ENCODE measurements at regions of chr15 and their contacts with region 1.

Region 1: GRCh38 chr15:53987480-53987879 is 9.2 kb downstream of the UNC13C start:
- DNase-seq: no peak
- H3K4me3 ChIP-seq: no peak overlapping the region
- H3K27ac ChIP-seq: no peak overlapping the region
- H3K4me1 ChIP-seq: no peaks in the 10 kb centered on the region
- H3K27me3 ChIP-seq: no peaks in the 10 kb centered on the region
- CTCF ChIP-seq: no peak
- EP300 ChIP-seq: no peak
- POLR2A ChIP-seq: no peak

Region 2: GRCh38 chr15:53791581-53791980 is 195.9 kb before region 1 on chr15:
- intact Hi-C with region 1: no loop called
- DNase-seq: peak in 1 of 5 donors; percentile 11
- H3K4me3 ChIP-seq: no peak overlapping the region
- H3K27ac ChIP-seq: no peak overlapping the region
- H3K4me1 ChIP-seq: no peaks in the 10 kb centered on the region
- H3K27me3 ChIP-seq: no peaks in the 10 kb centered on the region
- CTCF ChIP-seq: no peak
- EP300 ChIP-seq: no peak
- POLR2A ChIP-seq: no peak

Region 3: GRCh38 chr15:54035617-54036016 is 48.1 kb after region 1 on chr15:
- intact Hi-C with region 1: loop called in 1 of 4 experiments (anchors 5 kb)
- DNase-seq: no peak
- H3K4me3 ChIP-seq: no peak overlapping the region
- H3K27ac ChIP-seq: no peak overlapping the region
- H3K4me1 ChIP-seq: no peaks in the 10 kb centered on the region
- H3K27me3 ChIP-seq: no peaks in the 10 kb centered on the region
- CTCF ChIP-seq: no peak
- EP300 ChIP-seq: no peak
- POLR2A ChIP-seq: no peak

Region 4: DNA sequence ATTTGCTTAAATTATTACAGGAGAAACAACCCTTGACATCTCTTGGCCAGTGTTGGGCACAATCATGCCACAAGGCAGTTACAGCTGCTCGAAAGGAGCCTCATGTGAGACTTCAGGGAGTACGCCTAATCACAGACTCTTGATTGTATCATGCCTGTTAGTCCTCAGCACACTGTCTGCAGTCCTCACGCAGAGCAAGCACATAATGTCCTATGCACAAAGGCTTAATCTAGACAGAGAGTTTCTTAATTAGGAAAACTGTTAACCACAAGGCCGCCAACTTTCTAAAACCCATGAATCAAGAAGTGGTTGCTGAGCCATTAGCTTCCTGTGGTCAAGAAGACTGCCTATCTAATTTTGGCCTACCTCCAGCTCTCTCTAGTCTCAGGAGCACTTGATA is 162.8 kb after region 1 on chr15:
- intact Hi-C with region 1: no loop called
- DNase-seq: no peak
- H3K4me3 ChIP-seq: no peak overlapping the region
- H3K27ac ChIP-seq: no peak overlapping the region
- H3K4me1 ChIP-seq: no peaks in the 10 kb centered on the region
- H3K27me3 ChIP-seq: no peaks in the 10 kb centered on the region
- CTCF ChIP-seq: no peak
- EP300 ChIP-seq: no peak
- POLR2A ChIP-seq: no peak

Measured in ovary (tissue), 10 donors.